CD4-positive, alpha-beta T cell (primary cell): ENCODE measurements at regions of chr11 and their contacts with region 1.

Region 1: GRCh38 chr11:3824714-3825472 is 15.9 kb downstream of the RHOG start:
- DNase-seq: peak; percentile 69 to 90 (median 80)
- ATAC-seq: peak; percentile 100
- H3K4me3 ChIP-seq: no peak overlapping the region
- H3K4me3 Mint-ChIP-seq: no peak overlapping the region
- H3K27ac ChIP-seq: peak overlapping the region in 1 of 2 donors; percentile 10
- H3K27ac Mint-ChIP-seq: peak overlapping the region; percentile 77
- H3K4me1 ChIP-seq: peaks cover 30% of the 10 kb centered on the region
- H3K4me1 Mint-ChIP-seq: peaks cover 38% of the 10 kb centered on the region
- H3K27me3 ChIP-seq: no peaks in the 10 kb centered on the region
- H3K27me3 Mint-ChIP-seq: no peaks in the 10 kb centered on the region
- CTCF ChIP-seq: peak; percentile 75

Region 2: DNA sequence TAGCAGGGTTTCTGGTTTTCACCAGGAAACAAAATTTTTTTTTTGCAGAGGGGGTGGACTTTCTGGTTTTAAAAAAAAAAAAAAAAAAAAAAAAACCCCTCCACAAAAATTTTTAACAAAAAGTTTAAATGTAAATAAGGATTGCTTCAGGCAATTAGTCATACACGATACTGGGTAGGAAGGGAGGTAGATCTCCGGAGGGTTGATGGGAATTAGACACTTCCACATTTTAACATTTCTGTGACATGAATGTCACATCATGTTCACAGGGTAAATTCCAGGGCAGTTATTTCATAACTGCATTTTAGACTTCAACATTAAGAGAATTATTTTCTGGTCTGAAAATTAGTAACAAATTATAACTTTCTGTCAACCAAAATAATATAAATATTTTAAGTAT is 43.5 kb before region 1 on chr11:
- CTCF ChIA-PET with region 1: no interaction called
- POLR2A ChIA-PET with region 1: no interaction called
- intact Hi-C with region 1: no loop called
- DNase-seq: peak in 2 of 14 experiments; percentile 51 to 61
- ATAC-seq: no peak
- H3K4me3 ChIP-seq: no peak overlapping the region
- H3K4me3 Mint-ChIP-seq: no peak overlapping the region
- H3K27ac ChIP-seq: no peak overlapping the region
- H3K27ac Mint-ChIP-seq: peak overlapping the region; percentile 47
- H3K4me1 ChIP-seq: peaks cover 27% of the 10 kb centered on the region
- H3K4me1 Mint-ChIP-seq: peaks cover 50% of the 10 kb centered on the region
- H3K27me3 ChIP-seq: no peaks in the 10 kb centered on the region
- H3K27me3 Mint-ChIP-seq: no peaks in the 10 kb centered on the region
- CTCF ChIP-seq: no peak

Region 3: GRCh38 chr11:3797329-3798095 is 27.4 kb before region 1 on chr11 and contains the start of gene NUP98:
- CTCF ChIA-PET with region 1: no interaction called
- POLR2A ChIA-PET with region 1: no interaction called
- intact Hi-C with region 1: no loop called
- DNase-seq: peak; percentile 98 to 100 (median 99)
- ATAC-seq: peak; percentile 93
- H3K4me3 ChIP-seq: peak within 1 kb of the TSS; percentile 98
- H3K4me3 Mint-ChIP-seq: peak within 1 kb of the TSS; percentile 89
- H3K27ac ChIP-seq: peak within 1 kb of the TSS; percentile 95
- H3K27ac Mint-ChIP-seq: peak within 1 kb of the TSS; percentile 97
- H3K4me1 ChIP-seq: peaks cover 37% of the 10 kb centered on the region
- H3K4me1 Mint-ChIP-seq: peaks cover 46% of the 10 kb centered on the region
- H3K27me3 ChIP-seq: no peaks in the 10 kb centered on the region
- H3K27me3 Mint-ChIP-seq: no peaks in the 10 kb centered on the region
- CTCF ChIP-seq: no peak
- total RNA-seq, gene NUP98: 161 to 186 TPM

Region 4: DNA sequence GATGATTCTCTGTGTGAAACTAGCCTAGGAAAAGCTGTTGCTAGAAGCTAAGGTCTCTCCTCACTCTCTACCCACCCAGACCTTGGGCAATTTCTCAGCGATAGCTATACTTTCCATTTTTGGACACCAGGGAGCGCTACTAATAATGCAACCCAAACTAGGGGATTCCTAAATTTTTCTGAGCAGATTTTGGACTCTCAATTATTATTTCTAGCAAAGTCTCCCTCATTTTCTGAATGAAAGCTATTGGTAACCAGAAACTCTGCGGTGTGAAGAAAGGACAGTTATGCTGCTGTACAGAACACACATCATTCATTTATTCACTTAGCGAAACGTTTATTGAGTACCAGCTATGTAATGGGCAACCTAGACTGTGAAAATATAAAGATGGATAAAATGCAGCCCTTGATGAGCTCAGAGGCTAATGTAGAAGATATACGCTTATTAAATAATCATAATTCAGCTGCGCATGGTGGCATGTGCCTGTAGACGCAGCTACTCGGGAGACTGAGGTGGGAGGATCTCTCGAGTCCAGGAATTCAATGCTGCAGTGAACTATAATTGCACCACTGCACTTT is 24.5 kb after region 1 on chr11:
- CTCF ChIA-PET with region 1: interaction called, 10 read pairs
- POLR2A ChIA-PET with region 1: interaction called, 9 read pairs
- intact Hi-C with region 1: no loop called
- DNase-seq: peak in 7 of 14 experiments; percentile 34 to 82 (median 69)
- ATAC-seq: peak; percentile 47
- H3K4me3 ChIP-seq: no peak overlapping the region
- H3K4me3 Mint-ChIP-seq: peak overlapping the region; percentile 1
- H3K27ac ChIP-seq: no peak overlapping the region
- H3K27ac Mint-ChIP-seq: peak overlapping the region; percentile 70
- H3K4me1 ChIP-seq: peaks cover 30% of the 10 kb centered on the region
- H3K4me1 Mint-ChIP-seq: peaks cover 45% of the 10 kb centered on the region
- H3K27me3 ChIP-seq: no peaks in the 10 kb centered on the region
- H3K27me3 Mint-ChIP-seq: no peaks in the 10 kb centered on the region
- CTCF ChIP-seq: peak; percentile 79

Region 5: DNA sequence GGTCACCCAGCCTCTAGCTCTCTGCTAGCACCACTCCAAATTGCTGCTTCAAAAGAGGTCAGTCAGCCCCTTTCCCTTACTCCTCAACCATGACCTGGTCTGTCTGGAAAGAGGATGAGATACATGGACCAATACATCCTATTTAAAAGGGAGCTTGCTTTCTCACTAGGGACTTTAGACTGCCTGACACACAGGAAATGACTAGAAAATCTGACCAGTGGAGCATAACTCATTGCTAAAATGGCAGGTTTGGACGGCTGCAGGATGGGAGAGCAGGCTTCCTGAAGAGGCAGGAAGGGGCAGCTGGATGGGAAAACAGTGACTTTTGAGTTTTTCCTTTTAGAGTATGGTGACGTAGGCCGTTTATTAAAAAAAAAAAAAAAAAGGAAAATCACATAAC is 55.8 kb after region 1 on chr11:
- CTCF ChIA-PET with region 1: interaction called, 4 read pairs
- POLR2A ChIA-PET with region 1: no interaction called
- intact Hi-C with region 1: loop called in 1 of 2 experiments (anchors 1 kb)
- DNase-seq: no peak
- ATAC-seq: no peak
- H3K4me3 ChIP-seq: no peak overlapping the region
- H3K4me3 Mint-ChIP-seq: no peak overlapping the region
- H3K27ac ChIP-seq: no peak overlapping the region
- H3K27ac Mint-ChIP-seq: peak overlapping the region; percentile 60
- H3K4me1 ChIP-seq: peaks cover 38% of the 10 kb centered on the region
- H3K4me1 Mint-ChIP-seq: peaks cover 80% of the 10 kb centered on the region
- H3K27me3 ChIP-seq: no peaks in the 10 kb centered on the region
- H3K27me3 Mint-ChIP-seq: no peaks in the 10 kb centered on the region
- CTCF ChIP-seq: no peak

Region 6: GRCh38 chr11:4065601-4066377 is 240.9 kb after region 1 on chr11:
- CTCF ChIA-PET with region 1: no interaction called
- POLR2A ChIA-PET with region 1: no interaction called
- intact Hi-C with region 1: loop called in 1 of 2 experiments (anchors 1 kb)
- DNase-seq: no peak
- ATAC-seq: no peak
- H3K4me3 ChIP-seq: no peak overlapping the region
- H3K4me3 Mint-ChIP-seq: no peak overlapping the region
- H3K27ac ChIP-seq: no peak overlapping the region
- H3K27ac Mint-ChIP-seq: peak overlapping the region; percentile 69
- H3K4me1 ChIP-seq: peaks cover 48% of the 10 kb centered on the region
- H3K4me1 Mint-ChIP-seq: peaks cover 70% of the 10 kb centered on the region
- H3K27me3 ChIP-seq: no peaks in the 10 kb centered on the region
- H3K27me3 Mint-ChIP-seq: no peaks in the 10 kb centered on the region
- CTCF ChIP-seq: no peak